CD4-positive, alpha-beta T cell (primary cell): ENCODE measurements at regions of chr1 and their contacts with region 1.

Region 1: DNA sequence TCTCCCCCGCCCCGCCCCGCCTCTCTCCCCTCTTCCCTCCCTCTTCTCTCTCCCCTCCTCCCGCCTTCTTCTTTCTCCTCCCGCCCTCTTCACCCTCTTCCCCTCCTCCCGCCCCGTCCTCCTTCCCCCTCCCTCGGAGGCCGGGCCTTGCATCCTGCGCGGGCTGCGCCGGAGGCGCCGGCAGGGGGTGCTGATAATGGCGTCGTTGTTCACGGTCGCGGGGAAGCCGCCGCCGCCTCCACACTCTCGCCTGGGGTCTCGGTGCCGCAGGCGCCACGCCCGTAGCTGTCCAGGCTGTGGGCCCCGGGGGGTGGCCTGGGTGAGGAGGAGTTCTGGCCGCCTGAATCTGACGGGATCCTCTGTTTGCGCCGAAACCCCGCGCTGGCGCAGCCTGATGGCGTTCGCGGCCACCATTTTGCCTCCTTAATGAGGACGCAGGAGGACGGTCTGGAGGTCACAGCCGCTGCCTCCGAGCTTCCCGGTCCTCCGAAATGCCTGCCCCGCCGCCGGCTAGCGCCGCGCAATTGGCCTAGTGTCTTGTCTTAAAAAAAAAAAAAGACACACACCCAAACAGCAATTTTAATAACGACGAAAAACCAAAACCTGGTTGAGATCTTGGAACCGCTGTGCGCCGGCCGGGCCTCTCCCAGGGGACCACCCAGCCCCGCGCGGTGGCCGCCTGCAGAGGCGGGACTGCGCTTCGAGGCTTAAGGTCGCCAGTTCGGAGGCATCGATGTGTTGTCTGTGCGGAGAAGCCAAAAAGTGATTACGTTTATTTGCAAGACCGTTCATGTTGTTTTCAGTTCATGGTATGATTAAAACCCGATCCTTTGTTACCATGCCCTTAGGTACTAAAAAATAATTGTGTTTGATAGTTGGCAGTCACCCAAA is 106.6 kb upstream of the HNRNPU start:
- DNase-seq: peak; percentile 91 to 97 (median 93)
- ATAC-seq: peak; percentile 75
- H3K4me3 ChIP-seq: peak overlapping the region; percentile 86
- H3K4me3 Mint-ChIP-seq: peak overlapping the region; percentile 91
- H3K27ac ChIP-seq: peak overlapping the region; percentile 99 to 100
- H3K27ac Mint-ChIP-seq: peak overlapping the region; percentile 100
- H3K4me1 ChIP-seq: peaks cover 6% of the 10 kb centered on the region
- H3K4me1 Mint-ChIP-seq: peaks cover 30% of the 10 kb centered on the region
- H3K27me3 ChIP-seq: no peaks in the 10 kb centered on the region
- H3K27me3 Mint-ChIP-seq: no peaks in the 10 kb centered on the region
- CTCF ChIP-seq: peak; percentile 52

Region 2: DNA sequence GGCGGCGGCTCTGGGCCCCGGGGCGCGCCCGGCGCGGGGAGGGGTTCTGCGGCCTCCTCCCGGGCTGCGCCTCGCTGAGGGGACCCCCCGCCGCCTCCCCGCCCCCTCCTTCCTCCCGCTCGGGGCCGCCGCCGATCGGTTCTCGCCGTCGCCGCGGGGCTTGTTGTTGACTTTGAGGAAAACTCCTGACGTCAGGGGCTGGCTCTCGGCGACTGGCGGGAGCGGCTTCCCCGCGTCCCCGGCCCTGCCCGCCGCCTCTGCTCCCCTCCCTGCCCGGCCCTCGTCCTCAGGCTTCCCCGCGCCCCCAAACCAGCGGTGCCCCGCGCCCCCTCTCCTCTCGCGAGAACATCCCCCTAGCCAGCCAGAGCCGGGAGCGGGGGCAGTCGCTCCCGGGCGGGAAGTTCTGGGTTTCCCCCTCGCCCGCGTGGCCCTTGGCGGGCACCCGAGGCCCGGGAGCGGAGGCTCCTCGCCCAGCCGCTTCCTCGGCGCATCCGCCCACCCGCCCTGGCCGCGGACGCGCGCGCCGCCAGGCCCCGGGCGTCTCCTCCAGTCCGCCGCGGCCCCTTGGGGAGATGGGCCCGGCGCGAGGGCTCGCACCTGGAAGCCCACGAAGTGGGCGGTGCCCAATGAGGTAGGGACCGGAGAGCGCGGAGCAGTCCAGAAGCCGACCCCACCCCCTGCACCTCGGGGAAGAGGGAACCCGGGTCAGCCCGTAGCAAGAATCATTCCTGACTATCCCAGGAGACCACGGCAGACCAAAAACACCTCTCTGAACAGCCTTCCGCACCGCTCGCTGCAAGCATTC is 1120.3 kb before region 1 on chr1:
- CTCF ChIA-PET with region 1: no interaction called
- POLR2A ChIA-PET with region 1: no interaction called
- intact Hi-C with region 1: loop called in 1 of 2 experiments (anchors 10 kb)
- DNase-seq: peak in 11 of 14 experiments; percentile 74 to 95 (median 82)
- ATAC-seq: peak; percentile 38
- H3K4me3 ChIP-seq: peak overlapping the region; percentile 64
- H3K4me3 Mint-ChIP-seq: peak overlapping the region; percentile 98
- H3K27ac ChIP-seq: peak overlapping the region; percentile 61 to 92
- H3K27ac Mint-ChIP-seq: peak overlapping the region; percentile 96
- H3K4me1 ChIP-seq: peaks cover 6% of the 10 kb centered on the region
- H3K4me1 Mint-ChIP-seq: peaks cover 40% of the 10 kb centered on the region
- H3K27me3 ChIP-seq: peaks cover 0 to 2% of the 10 kb centered on the region in 2 experiments
- H3K27me3 Mint-ChIP-seq: no peaks in the 10 kb centered on the region
- CTCF ChIP-seq: no peak

Region 3: GRCh38 chr1:244451951-244452795 is 518.7 kb before region 1 on chr1:
- CTCF ChIA-PET with region 1: no interaction called
- POLR2A ChIA-PET with region 1: interaction called, 7 read pairs
- intact Hi-C with region 1: loop called (anchors 2 to 5 kb)
- DNase-seq: peak; percentile 97 to 100 (median 99)
- ATAC-seq: peak; percentile 83
- H3K4me3 ChIP-seq: peak overlapping the region; percentile 86
- H3K4me3 Mint-ChIP-seq: peak overlapping the region; percentile 93
- H3K27ac ChIP-seq: peak overlapping the region; percentile 16 to 96
- H3K27ac Mint-ChIP-seq: peak overlapping the region; percentile 98
- H3K4me1 ChIP-seq: peaks cover 15% of the 10 kb centered on the region
- H3K4me1 Mint-ChIP-seq: peaks cover 42% of the 10 kb centered on the region
- H3K27me3 ChIP-seq: no peaks in the 10 kb centered on the region
- H3K27me3 Mint-ChIP-seq: no peaks in the 10 kb centered on the region
- CTCF ChIP-seq: peak; percentile 45

Region 4: DNA sequence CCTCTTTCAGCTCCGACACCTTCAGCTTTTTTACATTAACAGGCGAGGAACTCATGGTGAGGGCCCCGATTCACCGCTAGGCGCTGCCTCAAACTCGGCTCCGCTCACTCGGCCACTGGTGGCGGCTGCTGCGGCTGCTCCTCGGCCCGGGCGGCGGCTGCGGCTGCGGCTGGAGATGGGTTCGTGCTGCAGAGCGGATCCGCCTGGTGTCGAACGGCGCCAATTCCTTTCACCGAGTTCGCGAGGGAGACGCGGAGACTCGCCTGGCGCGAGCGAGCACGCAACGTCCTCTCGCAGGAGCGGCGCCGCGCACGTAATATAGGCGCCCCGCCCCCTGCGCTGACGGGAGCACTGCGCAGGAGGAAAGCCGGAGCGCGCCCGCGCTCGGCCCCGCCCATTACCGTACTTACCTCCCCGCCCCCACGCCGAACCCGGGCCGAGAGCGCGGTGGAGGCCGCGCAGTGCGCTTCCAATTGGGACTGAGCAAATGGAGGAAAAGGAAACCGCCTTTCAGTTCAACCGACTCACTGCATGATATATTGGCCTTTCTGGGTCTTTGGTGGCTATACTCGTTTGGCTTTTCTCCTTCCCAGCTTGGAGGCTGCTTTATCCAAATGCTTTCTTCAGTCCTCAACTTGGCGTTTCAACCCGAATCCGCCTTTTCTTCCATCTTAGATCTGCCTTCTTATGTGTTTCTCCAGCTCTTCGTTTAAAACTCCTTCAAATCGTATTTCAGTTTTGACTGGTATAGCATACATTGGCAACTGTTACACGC is 106.5 kb before region 1 on chr1 and contains the start of gene HNRNPU:
- CTCF ChIA-PET with region 1: interaction called, 6 read pairs
- POLR2A ChIA-PET with region 1: interaction called, 354 read pairs
- intact Hi-C with region 1: loop called (anchors 1 kb)
- DNase-seq: peak; percentile 90 to 99 (median 96)
- ATAC-seq: peak; percentile 62
- H3K4me3 ChIP-seq: peak within 1 kb of the TSS; percentile 91
- H3K4me3 Mint-ChIP-seq: peak within 1 kb of the TSS; percentile 96
- H3K27ac ChIP-seq: peak within 1 kb of the TSS; percentile 98 to 99
- H3K27ac Mint-ChIP-seq: peak within 1 kb of the TSS; percentile 98
- H3K4me1 ChIP-seq: peaks cover 24% of the 10 kb centered on the region
- H3K4me1 Mint-ChIP-seq: peaks cover 53% of the 10 kb centered on the region
- H3K27me3 ChIP-seq: no peaks in the 10 kb centered on the region
- H3K27me3 Mint-ChIP-seq: peaks cover 5% of the 10 kb centered on the region
- CTCF ChIP-seq: peak; percentile 30
- total RNA-seq, gene HNRNPU: 415 TPM

Region 5: DNA sequence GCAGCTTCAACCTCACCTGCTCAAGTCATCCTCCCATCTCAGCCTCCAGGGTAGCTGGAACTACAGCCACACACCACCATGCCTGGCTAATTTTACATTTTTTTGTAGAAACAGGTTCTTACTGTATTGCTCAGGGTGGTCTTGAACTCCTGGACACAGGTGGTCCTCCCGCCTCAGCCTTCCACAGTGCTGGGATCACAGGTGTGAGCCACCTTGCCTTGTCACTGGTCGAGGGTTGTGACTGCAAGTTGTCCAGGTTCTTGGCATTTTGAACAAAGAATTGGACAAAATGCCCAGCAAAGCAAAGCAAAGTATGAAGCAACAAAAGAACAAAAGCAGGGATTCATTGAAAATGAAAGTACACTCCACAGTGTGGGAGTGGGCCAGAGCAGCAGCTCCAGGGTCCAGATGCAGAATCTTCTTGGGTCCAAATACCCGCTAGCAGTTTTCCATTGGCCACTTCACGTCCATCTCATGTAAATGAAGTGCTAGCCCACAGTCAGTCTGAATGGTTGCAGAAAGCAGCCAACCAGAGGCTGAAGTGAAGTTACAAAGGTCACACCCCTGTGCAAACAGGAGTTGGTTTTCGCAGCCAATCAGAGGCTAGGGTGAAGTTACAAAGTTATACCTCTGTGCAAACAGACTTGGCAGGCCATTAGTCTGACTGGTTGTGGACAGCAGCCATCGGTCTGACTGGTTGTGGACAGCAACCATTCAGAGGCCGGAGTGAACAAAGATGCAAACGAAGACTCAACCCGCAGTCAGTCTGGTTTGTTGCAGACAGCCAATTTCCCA is 74.4 kb after region 1 on chr1:
- CTCF ChIA-PET with region 1: interaction called, 13 read pairs
- POLR2A ChIA-PET with region 1: interaction called, 8 read pairs
- intact Hi-C with region 1: loop called (anchors 2 to 5 kb)
- DNase-seq: no peak
- ATAC-seq: no peak
- H3K4me3 ChIP-seq: no peak overlapping the region
- H3K4me3 Mint-ChIP-seq: no peak overlapping the region
- H3K27ac ChIP-seq: no peak overlapping the region
- H3K27ac Mint-ChIP-seq: no peak overlapping the region
- H3K4me1 ChIP-seq: no peaks in the 10 kb centered on the region
- H3K4me1 Mint-ChIP-seq: no peaks in the 10 kb centered on the region
- H3K27me3 ChIP-seq: no peaks in the 10 kb centered on the region
- H3K27me3 Mint-ChIP-seq: no peaks in the 10 kb centered on the region
- CTCF ChIP-seq: no peak

Region 6: DNA sequence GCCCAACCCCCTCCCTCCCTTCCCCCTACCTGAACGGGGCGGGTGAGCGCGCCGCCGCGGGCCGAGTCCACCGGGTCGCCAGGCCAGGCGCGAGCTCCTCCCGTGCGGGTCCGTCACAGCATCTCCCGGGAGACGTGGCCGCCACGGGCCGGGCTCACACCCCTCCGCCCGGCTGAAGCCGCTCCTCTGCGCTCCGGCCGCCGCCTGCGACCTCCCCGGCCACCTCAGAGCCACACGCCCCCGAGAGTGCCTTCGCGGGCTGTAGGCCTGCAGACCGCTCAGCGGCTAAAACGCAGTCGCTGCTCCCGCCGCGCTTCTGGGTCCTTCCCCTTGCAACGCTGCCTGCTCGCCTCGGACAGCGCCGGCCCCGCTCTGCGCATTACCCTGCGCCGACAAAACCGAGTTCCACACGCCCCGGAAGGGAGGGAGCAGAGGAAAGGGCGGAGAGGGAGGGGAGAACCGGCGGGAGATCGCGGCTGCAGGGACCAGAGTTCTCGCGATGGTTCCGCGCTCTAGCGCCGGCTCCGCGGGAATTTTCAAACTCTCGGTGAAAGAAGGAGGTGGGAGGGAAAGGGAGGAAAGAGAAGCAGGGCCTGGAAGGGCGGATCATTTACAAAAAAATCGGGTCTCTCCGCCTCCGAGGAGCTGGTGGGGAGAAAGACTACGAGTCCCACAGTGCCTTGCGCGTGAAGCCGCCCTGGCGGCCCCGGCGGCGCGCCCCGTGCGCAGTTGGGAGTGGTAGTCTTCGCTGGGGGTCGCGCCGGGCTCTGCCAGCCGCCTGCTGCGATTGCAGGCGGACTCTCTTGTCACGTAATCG is 1960.9 kb after region 1 on chr1 and contains the start of gene AHCTF1:
- CTCF ChIA-PET with region 1: no interaction called
- POLR2A ChIA-PET with region 1: no interaction called
- intact Hi-C with region 1: loop called in 1 of 2 experiments (anchors 10 kb)
- DNase-seq: peak; percentile 89 to 98 (median 92)
- ATAC-seq: peak; percentile 90
- H3K4me3 ChIP-seq: peak within 1 kb of the TSS; percentile 94
- H3K4me3 Mint-ChIP-seq: peak within 1 kb of the TSS; percentile 99
- H3K27ac ChIP-seq: peak within 1 kb of the TSS; percentile 87 to 88
- H3K27ac Mint-ChIP-seq: peak within 1 kb of the TSS; percentile 96
- H3K4me1 ChIP-seq: peaks cover 20% of the 10 kb centered on the region
- H3K4me1 Mint-ChIP-seq: peaks cover 46% of the 10 kb centered on the region
- H3K27me3 ChIP-seq: no peaks in the 10 kb centered on the region
- H3K27me3 Mint-ChIP-seq: no peaks in the 10 kb centered on the region
- CTCF ChIP-seq: no peak
- total RNA-seq, gene AHCTF1: 65.6 to 68.8 TPM